Dorsolateral prefrontal cortex (tissue), 120 donors: ENCODE measurements at regions of chr16 and their contacts with region 1.

Region 1: GRCh38 chr16:30585400-30586189 is at the start of gene ZNF785:
- DNase-seq: peak; percentile 84 to 99 (median 96)
- H3K4me3 ChIP-seq: peak within 1 kb of the TSS; percentile 52 to 98 (median 85)
- H3K27ac ChIP-seq: peak within 1 kb of the TSS; percentile 66 to 98 (median 92)
- H3K27me3 ChIP-seq: no peaks in the 10 kb centered on the region
- CTCF ChIP-seq: peak; percentile 32 to 91 (median 74)
- total RNA-seq, gene ZNF785: 16.4 to 51.1 (median 30.1) TPM

Region 2: GRCh38 chr16:30534368-30535105 is 51.1 kb before region 1 on chr16 and contains the start of gene ZNF747:
- intact Hi-C with region 1: loop called in 1 of 2 experiments (anchors 1 kb)
- DNase-seq: peak; percentile 91 to 97 (median 94)
- H3K4me3 ChIP-seq: peak within 1 kb of the TSS; percentile 61 to 97 (median 85)
- H3K27ac ChIP-seq: peak within 1 kb of the TSS; percentile 71 to 98 (median 92)
- H3K27me3 ChIP-seq: no peaks in the 10 kb centered on the region
- CTCF ChIP-seq: peak in 39 of 56 donors; percentile 6 to 54 (median 30)
- total RNA-seq, gene ZNF747: 9.2 to 17.9 (median 12.6) TPM

Region 3: DNA sequence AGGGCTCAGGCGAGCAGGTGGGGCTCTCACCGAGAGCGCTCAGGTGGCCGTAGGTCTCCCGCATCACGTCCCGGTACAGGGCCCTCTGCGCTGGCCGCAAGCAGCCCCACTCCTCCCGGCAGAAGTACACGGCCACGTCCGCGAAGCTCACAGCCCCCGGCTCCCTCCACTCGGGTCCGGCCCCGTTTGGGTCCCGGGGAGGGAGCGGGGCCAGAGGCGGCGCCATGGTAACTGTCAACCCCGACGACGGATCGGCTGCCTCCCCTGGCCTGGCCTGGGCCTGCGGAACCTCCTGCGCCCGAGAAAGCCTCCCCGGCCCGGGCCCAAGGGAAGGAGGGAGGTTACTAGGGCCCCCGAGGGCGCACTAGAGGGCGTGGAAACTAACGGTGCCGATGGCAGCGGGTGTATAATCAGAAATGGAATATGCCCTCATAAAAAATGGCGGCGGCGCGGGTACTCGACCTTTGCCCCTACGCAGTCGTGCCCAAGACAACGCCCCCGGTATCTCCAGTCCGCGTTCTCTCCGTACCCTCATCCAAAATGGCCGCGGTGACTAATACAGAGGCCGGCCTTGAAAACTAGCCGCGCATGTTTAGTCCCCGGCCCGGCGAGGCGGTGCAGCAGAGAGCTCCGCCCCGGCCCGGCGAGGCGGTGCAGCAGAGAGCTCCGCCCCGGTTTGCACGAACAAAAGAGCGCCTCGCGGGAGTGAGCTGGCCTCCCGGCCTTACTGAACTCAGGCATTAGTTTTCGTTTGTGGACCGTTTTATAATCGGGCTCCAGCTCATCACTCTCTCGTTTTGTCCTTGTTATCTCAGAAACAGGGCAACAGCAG is 27.4 kb before region 1 on chr16 and contains the start of gene ZNF764:
- intact Hi-C with region 1: loop called in 1 of 2 experiments (anchors 1 kb)
- DNase-seq: peak; percentile 97 to 99 (median 98)
- H3K4me3 ChIP-seq: peak within 1 kb of the TSS; percentile 72 to 100 (median 94)
- H3K27ac ChIP-seq: peak within 1 kb of the TSS; percentile 72 to 98 (median 94)
- H3K27me3 ChIP-seq: no peaks in the 10 kb centered on the region
- CTCF ChIP-seq: peak in 44 of 56 donors; percentile 5 to 67 (median 40)
- total RNA-seq, gene ZNF764: 8.2 to 19.0 (median 11.5) TPM

Region 4: DNA sequence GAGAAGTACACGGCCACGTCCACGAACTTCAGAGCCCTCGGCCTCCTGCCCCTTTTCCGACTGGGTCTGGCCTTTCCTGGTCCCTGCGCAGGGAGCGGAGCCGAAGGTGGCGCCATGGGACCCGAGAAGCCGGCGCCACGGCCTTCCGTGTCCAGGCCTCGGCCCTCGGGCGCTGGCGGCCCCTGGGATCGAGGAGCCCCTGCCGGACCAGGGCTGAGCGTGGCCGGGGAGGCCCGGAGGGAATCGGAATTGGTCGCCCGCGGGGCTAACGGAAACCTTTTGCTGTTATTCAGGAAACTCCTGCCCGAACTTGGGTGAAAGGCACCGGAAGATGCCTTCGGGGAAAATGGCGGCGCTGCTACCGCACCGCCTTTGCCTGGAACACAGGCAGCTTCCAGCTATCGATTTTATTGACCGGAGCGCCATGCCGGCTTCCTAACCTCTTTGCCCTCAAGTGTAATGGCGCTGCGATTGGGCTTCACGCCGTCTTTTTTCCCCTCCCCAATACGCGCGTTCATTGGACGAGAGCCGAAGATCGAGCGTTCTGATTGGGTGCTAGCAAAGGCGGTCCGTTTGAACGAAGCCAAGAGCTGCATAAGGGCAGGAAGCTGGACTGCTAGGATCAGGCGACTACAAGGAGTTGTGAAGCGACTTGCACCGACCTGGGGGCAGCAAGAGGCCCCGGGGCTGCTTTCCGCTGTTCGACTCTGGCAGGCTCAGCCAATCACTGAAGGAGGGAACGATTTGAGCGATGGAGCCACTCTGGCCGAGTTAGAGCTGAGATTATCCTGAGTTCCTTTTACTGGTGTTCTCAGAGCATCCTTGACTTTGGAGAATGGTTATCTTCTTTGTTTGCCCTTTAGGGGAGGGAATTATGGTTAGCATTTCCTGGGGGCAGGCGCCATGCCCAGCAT is 24.6 kb after region 1 on chr16 and contains the start of gene ZNF689:
- intact Hi-C with region 1: loop called in 1 of 2 experiments (anchors 1 kb)
- DNase-seq: peak; percentile 93 to 98 (median 96)
- H3K4me3 ChIP-seq: peak within 1 kb of the TSS; percentile 65 to 100 (median 93)
- H3K27ac ChIP-seq: peak within 1 kb of the TSS; percentile 27 to 99 (median 96)
- H3K27me3 ChIP-seq: no peaks in the 10 kb centered on the region
- CTCF ChIP-seq: peak in 25 of 56 donors; percentile 4 to 49 (median 27)
- total RNA-seq, gene ZNF689: 5.9 to 15.6 (median 8.8) TPM

Region 5: GRCh38 chr16:30628627-30629540 is 43.3 kb after region 1 on chr16:
- intact Hi-C with region 1: loop called (anchors 5 kb)
- DNase-seq: peak; percentile 74 to 91 (median 84)
- H3K4me3 ChIP-seq: peak overlapping the region in 35 of 59 donors; percentile 0 to 50 (median 27)
- H3K27ac ChIP-seq: peak overlapping the region in 33 of 59 donors; percentile 4 to 83 (median 56)
- H3K27me3 ChIP-seq: no peaks in the 10 kb centered on the region
- CTCF ChIP-seq: peak; percentile 77 to 97 (median 91)

Region 6: GRCh38 chr16:30650369-30651123 is 65.0 kb after region 1 on chr16 and contains the start of gene PRR14:
- intact Hi-C with region 1: loop called (anchors 2 to 5 kb)
- DNase-seq: peak; percentile 98 to 100 (median 99)
- H3K4me3 ChIP-seq: peak within 1 kb of the TSS; percentile 64 to 98 (median 90)
- H3K27ac ChIP-seq: peak within 1 kb of the TSS; percentile 80 to 100 (median 97)
- H3K27me3 ChIP-seq: no peaks in the 10 kb centered on the region
- CTCF ChIP-seq: peak in 53 of 56 donors; percentile 25 to 74 (median 57)
- total RNA-seq, gene PRR14: 23.4 to 64.9 (median 40.0) TPM

Region 7: DNA sequence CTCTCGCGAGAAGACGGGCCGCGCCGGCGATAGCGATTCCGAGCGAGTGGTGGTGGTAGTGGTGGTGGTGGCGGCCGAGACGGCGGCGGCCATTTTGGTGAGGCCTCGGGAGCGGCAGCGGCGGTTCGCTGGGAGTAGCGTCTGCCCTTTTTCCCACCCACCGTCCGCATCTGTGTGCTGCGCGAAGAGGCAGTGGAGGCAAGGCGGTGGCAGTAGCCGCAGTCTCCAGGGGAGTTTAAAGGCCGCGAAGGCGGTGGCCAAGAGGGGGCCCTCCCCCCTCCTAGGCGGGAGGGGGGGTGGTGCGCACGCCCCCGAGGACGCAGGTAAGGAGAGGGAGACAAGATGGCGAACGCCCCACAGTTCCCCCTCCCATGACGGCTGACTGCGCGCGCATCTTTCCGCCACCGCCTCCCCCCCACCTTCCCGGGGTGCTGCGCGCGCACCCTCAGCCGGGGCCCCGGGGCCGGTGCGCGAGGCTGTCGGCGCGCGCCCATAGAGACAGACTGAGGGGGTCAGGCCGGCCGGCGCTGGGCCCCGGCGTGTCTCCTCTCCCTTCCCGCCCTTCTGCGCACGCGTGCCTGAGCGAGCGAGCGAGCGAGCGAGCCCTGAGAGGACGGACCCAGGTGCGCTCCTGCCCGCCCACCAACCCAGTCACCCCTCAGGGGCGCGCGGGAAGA is 112.7 kb after region 1 on chr16:
- intact Hi-C with region 1: no loop called
- DNase-seq: peak; percentile 68 to 98 (median 82)
- H3K4me3 ChIP-seq: peak overlapping the region; percentile 76 to 100 (median 96)
- H3K27ac ChIP-seq: peak overlapping the region; percentile 99 to 100 (median 100)
- H3K27me3 ChIP-seq: no peaks in the 10 kb centered on the region
- CTCF ChIP-seq: peak in 17 of 56 donors; percentile 1 to 52 (median 12)